ENCODE measurements at regions of chr21 and their contacts with region 1.

Region 1: DNA sequence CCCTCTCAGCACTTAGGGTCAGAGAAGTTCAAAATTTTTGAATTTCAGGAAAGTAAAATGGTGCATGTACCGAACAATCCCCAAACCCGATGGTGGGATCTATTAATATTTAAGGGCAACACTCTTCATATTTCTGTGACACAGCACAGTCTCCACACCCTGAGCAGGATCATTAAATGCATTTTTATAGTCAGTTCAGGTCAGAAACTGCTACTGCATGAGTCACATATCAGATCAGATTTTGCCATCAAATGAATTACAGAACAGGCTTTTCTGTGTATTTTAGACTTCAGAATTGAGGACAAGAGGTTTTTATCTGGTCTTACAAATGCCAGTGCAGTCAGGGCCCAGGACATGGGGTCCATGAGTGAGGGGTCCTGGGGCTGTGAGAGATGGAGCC is 79.2 kb downstream of the RIPK4 start:
- DNase-seq: no peak
- H3K4me3 ChIP-seq: no peak overlapping the region
- H3K27ac ChIP-seq: no peak overlapping the region
- H3K4me1 ChIP-seq: peaks cover 30% of the 10 kb centered on the region
- H3K27me3 ChIP-seq: no peaks in the 10 kb centered on the region
- CTCF ChIP-seq: no peak
- POLR2A ChIP-seq: no peak

Region 2: GRCh38 chr21:41258617-41259016 is 429.0 kb before region 1 on chr21:
- intact Hi-C with region 1: no loop called
- DNase-seq: no peak
- H3K4me3 ChIP-seq: no peak overlapping the region
- H3K27ac ChIP-seq: no peak overlapping the region
- H3K4me1 ChIP-seq: no peaks in the 10 kb centered on the region
- H3K27me3 ChIP-seq: no peaks in the 10 kb centered on the region
- CTCF ChIP-seq: no peak
- POLR2A ChIP-seq: no peak

Region 3: DNA sequence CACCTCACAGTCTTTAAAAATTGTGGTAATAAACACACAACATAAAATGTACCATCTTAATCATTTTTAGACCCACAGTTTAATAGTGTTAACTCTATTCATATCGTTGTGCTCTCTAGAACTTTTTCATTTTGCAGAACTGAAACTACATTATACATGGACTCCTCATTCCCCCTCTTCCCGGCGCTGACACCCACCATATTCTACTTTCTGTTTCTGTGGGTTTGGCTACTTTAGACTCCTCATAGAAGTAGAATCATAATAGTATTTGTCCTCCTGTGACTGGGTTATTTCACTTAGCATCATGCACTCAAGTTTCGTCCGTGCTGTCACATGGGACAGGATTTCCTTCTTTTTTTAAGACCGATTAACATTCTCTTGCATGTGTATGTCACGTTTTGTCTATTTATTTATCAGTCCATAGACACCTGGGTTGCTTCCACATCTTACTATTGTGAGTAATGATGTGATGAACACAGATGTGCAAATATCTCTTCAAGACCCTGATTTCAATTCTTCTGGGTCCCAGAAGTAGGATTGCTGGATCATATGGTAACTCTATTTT is 116.8 kb before region 1 on chr21:
- intact Hi-C with region 1: no loop called
- DNase-seq: no peak
- H3K4me3 ChIP-seq: no peak overlapping the region
- H3K27ac ChIP-seq: no peak overlapping the region
- H3K4me1 ChIP-seq: no peaks in the 10 kb centered on the region
- H3K27me3 ChIP-seq: no peaks in the 10 kb centered on the region
- CTCF ChIP-seq: no peak
- POLR2A ChIP-seq: no peak

Region 4: GRCh38 chr21:41733949-41734645 is 46.5 kb after region 1 on chr21:
- intact Hi-C with region 1: loop called (anchors 1 kb)
- DNase-seq: no peak
- H3K4me3 ChIP-seq: no peak overlapping the region
- H3K27ac ChIP-seq: no peak overlapping the region
- H3K4me1 ChIP-seq: no peaks in the 10 kb centered on the region
- H3K27me3 ChIP-seq: no peaks in the 10 kb centered on the region
- CTCF ChIP-seq: no peak
- POLR2A ChIP-seq: no peak

Measured in vagina (tissue), 2 donors.